A549 (cell line): ENCODE measurements at regions of chr17 and their contacts with region 1.

Region 1: DNA sequence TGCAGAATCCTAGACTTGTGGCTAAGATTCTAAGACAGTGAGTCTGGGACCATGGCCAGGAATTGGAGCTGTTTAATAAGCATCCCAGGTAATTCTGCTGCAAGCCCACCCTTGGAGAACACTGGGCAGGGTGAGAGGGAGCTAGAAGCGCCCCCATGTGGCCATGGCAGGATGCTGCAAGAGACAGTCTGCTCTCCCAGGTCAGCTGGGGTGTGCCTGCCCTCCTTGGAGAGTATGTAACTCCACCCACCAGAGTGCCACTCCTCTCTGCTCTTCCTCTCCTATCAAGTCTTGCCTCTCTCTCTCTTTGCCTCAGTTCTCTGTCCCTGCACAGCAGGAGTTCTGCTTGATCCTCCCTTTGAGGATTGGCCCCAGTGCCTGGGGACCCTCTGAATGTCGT is 14.9 kb downstream of the RCVRN start:
- DNase-seq: peak; percentile 52 to 75
- ATAC-seq: peak in 1 of 2 experiments; percentile 87; a peak in 4 of 6 replicates
- H3K4me3 ChIP-seq: no peak overlapping the region
- H3K27ac ChIP-seq: peak overlapping the region; percentile 32 to 61; a peak in 5 of 6 replicates
- H3K4me1 ChIP-seq: peaks cover 43% of the 10 kb centered on the region
- CTCF ChIP-seq: peak; percentile 49
- EP300 ChIP-seq: no peak
- POLR2A ChIP-seq: no peak
- RAD21 ChIP-seq: peak in 1 of 2 experiments; percentile 67; a peak in 4 of 5 replicates

Region 2: DNA sequence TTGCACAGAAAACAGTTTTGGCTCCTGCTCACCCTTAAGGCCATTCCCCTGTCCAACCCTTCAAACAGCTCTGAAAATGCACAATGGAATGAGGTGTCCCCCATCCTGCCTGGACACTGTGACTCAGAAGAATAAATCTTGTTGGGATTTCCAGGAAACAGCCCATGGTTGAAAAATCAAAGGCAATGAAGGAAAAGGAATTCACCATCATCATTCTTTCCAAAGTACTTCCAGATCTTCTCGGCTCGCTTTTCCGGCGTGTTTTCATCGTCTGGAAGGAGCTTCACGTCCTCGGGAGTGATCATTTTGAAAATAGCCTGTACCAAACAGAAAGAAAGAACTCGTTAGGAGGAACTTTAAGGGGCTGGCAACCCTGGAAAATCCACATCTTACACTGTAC is 10.7 kb after region 1 on chr17:
- CTCF ChIA-PET with region 1: interaction called, 26 read pairs
- POLR2A ChIA-PET with region 1: no interaction called
- DNase-seq: no peak
- ATAC-seq: peak in 1 of 2 experiments; percentile 58; a peak in 3 of 6 replicates
- H3K4me3 ChIP-seq: no peak overlapping the region
- H3K27ac ChIP-seq: peak overlapping the region; percentile 57 to 75
- H3K4me1 ChIP-seq: peaks cover 19% of the 10 kb centered on the region
- CTCF ChIP-seq: no peak
- EP300 ChIP-seq: no peak
- POLR2A ChIP-seq: no peak
- RAD21 ChIP-seq: no peak

Region 3: GRCh38 chr17:9905902-9906301 is 15.8 kb after region 1 on chr17:
- CTCF ChIA-PET with region 1: interaction called, 26 read pairs
- POLR2A ChIA-PET with region 1: no interaction called
- DNase-seq: peak; percentile 64 to 72
- ATAC-seq: peak; percentile 55 to 71; a peak in 4 of 6 replicates
- H3K4me3 ChIP-seq: no peak overlapping the region
- H3K27ac ChIP-seq: peak overlapping the region in 1 of 2 experiments; percentile 50; a peak in 3 of 6 replicates
- H3K4me1 ChIP-seq: peaks cover 23% of the 10 kb centered on the region
- CTCF ChIP-seq: peak; percentile 38
- EP300 ChIP-seq: no peak
- POLR2A ChIP-seq: no peak
- RAD21 ChIP-seq: peak in 1 of 2 experiments; percentile 49; a peak in 3 of 5 replicates

Region 4: DNA sequence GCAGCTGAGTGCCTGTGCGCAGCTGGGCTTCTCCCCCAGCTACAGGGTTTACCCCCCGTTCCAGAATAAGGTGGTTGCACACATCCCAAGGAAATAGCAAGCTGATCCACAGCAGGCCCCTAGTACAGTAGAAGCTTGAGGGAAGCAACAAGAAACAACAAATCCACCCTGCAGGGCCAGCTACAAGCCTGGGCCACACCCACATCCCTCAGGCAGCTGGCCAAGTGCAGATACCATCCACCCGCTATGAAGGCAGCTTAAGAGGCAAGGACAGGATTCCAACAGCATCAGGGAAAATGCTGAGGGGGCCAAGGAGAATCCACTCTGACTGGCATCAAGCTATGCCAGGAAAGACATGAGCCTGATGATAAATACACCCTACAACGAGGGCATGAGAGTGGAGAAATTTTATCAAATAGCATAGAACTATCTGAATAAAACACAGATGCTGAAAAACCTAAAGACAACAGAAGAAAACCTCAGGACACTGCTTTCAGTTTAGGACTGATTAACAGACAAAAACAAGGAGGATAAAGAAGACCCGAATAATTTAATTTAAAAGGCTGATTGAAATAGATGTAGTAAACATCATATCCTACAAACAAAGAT is 82.0 kb after region 1 on chr17:
- CTCF ChIA-PET with region 1: no interaction called
- POLR2A ChIA-PET with region 1: no interaction called
- DNase-seq: peak in 1 of 2 experiments; percentile 24
- ATAC-seq: peak; percentile 48 to 66; a peak in 3 of 6 replicates
- H3K4me3 ChIP-seq: no peak overlapping the region
- H3K27ac ChIP-seq: no peak overlapping the region
- H3K4me1 ChIP-seq: peaks cover 21% of the 10 kb centered on the region
- CTCF ChIP-seq: no peak
- EP300 ChIP-seq: no peak
- POLR2A ChIP-seq: no peak
- RAD21 ChIP-seq: no peak